ENCODE measurements at regions of chr19 and their contacts with region 1.

Region 1: DNA sequence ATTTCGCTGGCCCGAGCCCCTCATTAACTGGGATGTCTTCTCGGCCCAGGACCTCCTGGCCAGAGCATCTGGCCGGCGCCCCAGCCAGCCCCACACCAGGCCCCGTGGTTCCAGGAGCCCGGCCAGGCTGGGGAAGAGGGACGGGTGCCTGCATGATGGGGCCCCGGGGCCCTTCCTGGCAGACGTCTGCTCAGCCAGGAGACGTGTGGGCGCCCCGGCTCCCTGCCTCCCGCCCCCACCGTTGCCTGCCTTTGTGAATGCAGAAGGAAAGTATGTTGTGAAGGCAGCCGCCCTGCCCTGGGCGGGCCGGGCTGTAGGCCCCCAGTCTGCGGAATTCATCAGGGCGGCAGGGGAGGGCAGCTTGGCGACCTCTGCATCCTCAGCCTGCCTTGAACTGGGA is 4.4 kb upstream of the COMP start:
- DNase-seq: peak in 1 of 2 experiments; percentile 40
- H3K4me3 ChIP-seq: no peak overlapping the region
- H3K4me3 Mint-ChIP-seq: no peak overlapping the region
- H3K27ac Mint-ChIP-seq: no peak overlapping the region
- H3K4me1 ChIP-seq: peaks cover 6% of the 10 kb centered on the region
- H3K4me1 Mint-ChIP-seq: peaks cover 1% of the 10 kb centered on the region
- H3K27me3 ChIP-seq: no peaks in the 10 kb centered on the region
- H3K27me3 Mint-ChIP-seq: peaks cover 3% of the 10 kb centered on the region
- CTCF ChIP-seq: no peak

Region 2: GRCh38 chr19:18571564-18572300 is 223.8 kb before region 1 on chr19 and contains the start of gene UBA52:
- CTCF ChIA-PET with region 1: no interaction called
- POLR2A ChIA-PET with region 1: no interaction called
- intact Hi-C with region 1: no loop called
- DNase-seq: peak; percentile 97 to 98
- H3K4me3 ChIP-seq: peak within 1 kb of the TSS; percentile 98
- H3K4me3 Mint-ChIP-seq: peak within 1 kb of the TSS; percentile 93
- H3K27ac Mint-ChIP-seq: peak within 1 kb of the TSS; percentile 98
- H3K4me1 ChIP-seq: peaks cover 9% of the 10 kb centered on the region; the same call in 1 of the 2 replicates
- H3K4me1 Mint-ChIP-seq: peaks cover 11% of the 10 kb centered on the region
- H3K27me3 ChIP-seq: no peaks in the 10 kb centered on the region
- H3K27me3 Mint-ChIP-seq: no peaks in the 10 kb centered on the region
- CTCF ChIP-seq: no peak
- total RNA-seq, gene UBA52: 1,276 and 1,389 TPM in 2 replicates

Region 3: GRCh38 chr19:18831524-18832305 is 36.2 kb after region 1 on chr19 and contains the start of gene UPF1:
- CTCF ChIA-PET with region 1: interaction called, 5 read pairs
- POLR2A ChIA-PET with region 1: no interaction called
- intact Hi-C with region 1: loop called (anchors 5 kb)
- DNase-seq: peak; percentile 92 to 94
- H3K4me3 ChIP-seq: peak within 1 kb of the TSS; percentile 92
- H3K4me3 Mint-ChIP-seq: peak within 1 kb of the TSS; percentile 93
- H3K27ac Mint-ChIP-seq: peak within 1 kb of the TSS; percentile 89
- H3K4me1 ChIP-seq: 0 out of 2 replicates have a peak, but pooled peaks cover 8% of the 10 kb centered on the region
- H3K4me1 Mint-ChIP-seq: peaks cover 15% of the 10 kb centered on the region
- H3K27me3 ChIP-seq: no peaks in the 10 kb centered on the region
- H3K27me3 Mint-ChIP-seq: no peaks in the 10 kb centered on the region
- CTCF ChIP-seq: no peak
- total RNA-seq, gene UPF1: 93.8 and 96.6 TPM in 2 replicates

Measured in Caco-2 (cell line).